HCT116 (cell line): ENCODE measurements at regions of chr16 and their contacts with region 1.

Region 1: DNA sequence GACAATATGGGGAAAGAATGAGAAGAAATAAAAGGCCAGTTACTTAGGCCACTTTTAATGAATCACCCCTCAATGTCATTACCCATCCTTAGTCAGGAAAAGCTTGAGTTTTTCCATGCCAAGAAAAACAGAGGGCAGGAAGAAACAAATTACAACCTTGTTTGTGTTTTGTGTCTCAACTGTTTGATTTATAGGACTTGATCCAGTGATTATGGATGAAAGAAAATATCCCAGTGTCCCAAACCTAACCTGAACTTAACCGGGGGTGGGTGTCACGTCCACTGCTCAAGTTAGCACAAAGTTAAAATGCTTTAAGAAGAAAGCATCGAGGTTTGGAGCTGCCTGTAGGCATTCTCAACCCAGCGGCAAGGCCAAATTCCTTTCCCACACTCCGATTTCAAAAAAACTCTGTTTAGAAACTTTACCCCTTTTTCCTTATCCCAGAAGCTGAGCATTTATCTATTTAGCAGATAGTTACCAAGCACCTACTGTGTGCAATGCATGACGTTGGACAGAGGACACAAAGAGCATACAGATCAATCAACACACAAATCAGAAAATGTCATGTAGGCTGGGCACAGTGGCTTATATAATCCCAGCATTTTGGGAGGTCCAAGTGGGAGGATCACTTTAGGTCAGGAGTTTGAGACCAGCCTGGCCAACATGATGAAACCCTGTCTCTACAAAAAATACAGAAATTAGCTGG is 14.0 kb upstream of the CYB5B start:
- DNase-seq: peak; percentile 83
- ATAC-seq: peak; percentile 15
- H3K4me3 ChIP-seq: peak overlapping the region in 1 of 2 experiments; percentile 20; a peak in 2 of 4 replicates
- H3K27ac ChIP-seq: peak overlapping the region; percentile 99
- H3K4me1 ChIP-seq: peaks cover 64 to 95% of the 10 kb centered on the region in 2 experiments
- H3K27me3 ChIP-seq: no peaks in the 10 kb centered on the region
- CTCF ChIP-seq: no peak
- POLR2A ChIP-seq: no peak
- RAD21 ChIP-seq: no peak

Region 2: DNA sequence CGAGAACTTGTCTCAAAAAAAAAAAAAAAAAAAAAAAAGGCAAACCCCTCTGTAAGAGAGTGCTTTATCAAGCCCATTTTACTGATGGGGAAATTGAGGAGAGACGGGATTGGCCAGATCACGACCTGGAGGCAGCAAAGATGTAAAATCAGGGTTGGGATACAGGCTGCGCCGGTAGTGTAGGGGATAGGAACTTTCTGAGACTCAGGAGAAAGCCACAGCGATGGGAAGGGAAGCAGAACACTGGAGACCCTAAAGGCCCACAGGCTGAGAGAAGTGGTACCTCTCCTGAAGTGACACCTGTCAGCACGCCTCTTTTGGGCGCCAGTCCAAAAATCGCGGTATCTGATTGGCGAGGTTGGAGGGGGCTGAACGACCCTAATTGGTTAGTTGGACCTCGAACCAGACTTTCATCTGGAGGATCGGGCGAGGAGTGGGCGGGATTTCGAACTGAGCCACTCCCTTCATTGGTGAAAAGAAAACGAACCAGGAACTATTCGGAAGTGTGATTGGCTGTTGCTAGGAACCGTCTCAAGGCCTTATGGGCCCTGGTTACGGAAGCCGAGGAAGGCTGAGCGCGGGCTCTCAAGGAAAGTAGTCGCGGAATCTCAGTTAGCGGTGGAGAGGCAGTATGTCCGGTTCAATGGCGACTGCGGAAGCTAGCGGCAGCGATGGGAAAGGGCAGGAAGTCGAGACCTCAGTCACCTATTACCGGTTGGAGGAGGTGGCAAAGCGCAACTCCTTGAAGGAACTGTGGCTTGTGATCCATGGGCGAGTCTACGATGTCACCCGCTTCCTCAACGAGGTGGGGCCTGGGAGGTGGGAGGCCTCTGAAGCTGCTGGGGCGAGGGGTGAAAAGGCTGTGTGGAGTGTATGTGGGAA is 13.9 kb after region 1 on chr16 and contains the start of gene CYB5B:
- CTCF ChIA-PET with region 1: no interaction called
- POLR2A ChIA-PET with region 1: interaction called, 18 read pairs
- RAD21 ChIA-PET with region 1: no interaction called
- intact Hi-C with region 1: no loop called
- DNase-seq: peak; percentile 100
- ATAC-seq: peak; percentile 91
- H3K4me3 ChIP-seq: peak within 1 kb of the TSS; percentile 82 to 99
- H3K27ac ChIP-seq: peak within 1 kb of the TSS; percentile 90
- H3K4me1 ChIP-seq: peaks cover 52 to 63% of the 10 kb centered on the region in 2 experiments
- H3K27me3 ChIP-seq: no peaks in the 10 kb centered on the region
- CTCF ChIP-seq: no peak
- POLR2A ChIP-seq: peak; percentile 76
- RAD21 ChIP-seq: no peak
- total RNA-seq, gene CYB5B: 689 TPM